ENCODE measurements at regions of chr3 and their contacts with region 1.

Region 1: DNA sequence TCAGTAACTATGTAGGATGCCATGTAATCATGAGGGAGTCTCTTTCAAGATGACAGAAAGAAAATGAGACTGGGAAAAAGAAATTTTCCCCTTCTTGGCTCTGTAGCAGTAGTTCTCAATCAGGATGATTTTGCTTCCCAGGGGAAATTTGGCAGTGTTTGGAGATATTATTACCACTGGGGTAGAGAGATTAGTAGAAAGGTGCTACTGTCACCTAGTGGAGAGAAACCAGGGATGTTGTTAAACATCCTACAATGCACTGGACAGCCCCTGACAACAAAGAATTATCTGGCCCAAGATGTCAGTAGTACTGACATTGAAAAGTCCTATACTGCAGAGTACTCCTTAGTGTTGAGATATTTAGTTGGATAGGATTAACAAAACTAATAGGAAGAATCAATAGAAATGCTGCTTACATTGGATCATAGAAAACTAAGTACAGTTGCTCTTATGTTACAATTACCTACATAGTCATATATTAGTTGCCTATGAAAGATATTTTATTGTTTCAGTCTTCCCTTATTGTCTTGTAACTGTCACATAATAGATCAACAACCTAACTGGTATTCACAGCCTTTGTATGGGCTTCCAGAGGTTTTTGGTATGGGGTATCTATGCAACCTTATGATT is 433.3 kb downstream of the RAP2B start:
- DNase-seq: peak; percentile 32
- H3K4me3 Mint-ChIP-seq: no peak overlapping the region
- H3K27ac Mint-ChIP-seq: no peak overlapping the region
- H3K4me1 Mint-ChIP-seq: peaks cover 44% of the 10 kb centered on the region
- H3K27me3 Mint-ChIP-seq: no peaks in the 10 kb centered on the region
- CTCF ChIP-seq: peak; percentile 87

Region 2: DNA sequence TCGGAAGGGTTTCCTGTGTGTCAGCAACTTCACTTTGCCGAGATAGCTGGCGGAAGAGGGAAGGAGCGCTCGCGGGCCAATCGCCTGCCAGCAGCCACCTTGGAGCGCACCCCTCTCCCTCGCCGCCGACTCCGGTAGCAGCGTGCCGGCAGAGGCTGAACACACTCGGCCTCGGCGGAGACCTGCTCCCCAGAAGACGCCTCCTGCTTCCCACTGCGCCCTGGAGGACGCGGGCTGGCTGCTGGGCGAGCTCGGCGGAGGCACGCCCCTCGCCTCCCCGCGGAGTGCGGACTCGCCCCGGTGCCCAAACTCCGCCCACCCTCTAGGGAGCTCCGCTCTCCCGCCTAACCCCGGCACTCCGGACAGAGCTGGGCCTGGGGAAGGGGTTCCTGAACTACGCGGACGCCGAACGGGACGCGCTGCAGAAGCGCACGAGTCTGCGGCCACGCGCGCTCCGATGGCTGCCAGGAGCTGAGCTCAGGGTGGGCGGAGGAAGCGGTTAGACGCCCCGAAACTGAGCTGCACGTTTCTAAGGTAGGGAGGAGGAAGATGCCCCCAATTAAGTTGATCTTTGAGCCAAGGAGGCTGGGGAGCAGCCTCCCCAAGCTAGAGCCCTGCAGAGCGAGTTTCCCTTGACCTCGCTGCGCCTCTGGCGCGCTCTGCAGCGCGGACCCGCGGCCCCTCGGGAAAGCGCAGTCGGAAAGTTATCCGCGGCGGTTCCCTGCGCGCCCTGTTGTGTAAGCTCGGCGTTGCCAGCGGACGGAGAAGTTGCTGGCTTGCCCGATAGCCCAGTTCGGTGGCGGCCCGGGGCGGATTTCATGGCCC is 760.3 kb before region 1 on chr3 and contains the start of gene P2RY1:
- CTCF ChIA-PET with region 1: no interaction called
- intact Hi-C with region 1: loop called (anchors 10 kb)
- DNase-seq: peak; percentile 91
- H3K4me3 Mint-ChIP-seq: peak within 1 kb of the TSS; percentile 85
- H3K27ac Mint-ChIP-seq: peak within 1 kb of the TSS; percentile 46
- H3K4me1 Mint-ChIP-seq: peaks cover 59% of the 10 kb centered on the region
- H3K27me3 Mint-ChIP-seq: no peaks in the 10 kb centered on the region
- CTCF ChIP-seq: peak; percentile 52
- total RNA-seq, gene P2RY1: 19.6 and 21.0 TPM in 2 replicates

Region 3: GRCh38 chr3:153439777-153440176 is 155.5 kb before region 1 on chr3:
- CTCF ChIA-PET with region 1: interaction called, 4 read pairs
- intact Hi-C with region 1: loop called (anchors 5 kb)
- DNase-seq: no peak
- H3K4me3 Mint-ChIP-seq: no peak overlapping the region
- H3K27ac Mint-ChIP-seq: no peak overlapping the region
- H3K4me1 Mint-ChIP-seq: peaks cover 30% of the 10 kb centered on the region
- H3K27me3 Mint-ChIP-seq: no peaks in the 10 kb centered on the region
- CTCF ChIP-seq: no peak

Region 4: DNA sequence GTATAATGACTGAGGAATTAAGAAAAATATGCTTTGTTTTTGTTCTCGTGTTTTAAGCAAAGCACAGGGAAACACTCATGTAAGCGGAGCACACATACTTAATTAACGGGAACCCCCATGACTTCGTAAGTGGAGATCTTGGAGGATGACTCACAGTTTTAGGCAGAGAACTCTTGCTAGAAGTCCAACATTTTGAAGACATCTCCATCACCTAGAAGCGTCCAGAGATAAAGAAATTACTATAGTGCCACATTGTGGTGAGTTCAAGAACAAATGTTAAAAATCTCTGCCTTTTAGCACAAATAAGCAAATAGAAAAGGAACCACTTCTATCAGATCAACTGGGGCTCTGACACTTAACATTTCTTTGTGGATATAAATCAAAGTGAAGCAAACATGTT is 331.8 kb after region 1 on chr3:
- CTCF ChIA-PET with region 1: no interaction called
- intact Hi-C with region 1: no loop called
- DNase-seq: no peak
- H3K4me3 Mint-ChIP-seq: no peak overlapping the region
- H3K27ac Mint-ChIP-seq: no peak overlapping the region
- H3K4me1 Mint-ChIP-seq: no peaks in the 10 kb centered on the region
- H3K27me3 Mint-ChIP-seq: no peaks in the 10 kb centered on the region
- CTCF ChIP-seq: peak; percentile 38